Activated CD4-positive, alpha-beta T cell treated with anti-CD3 and anti-CD28 coated beads for 36 hours (primary cell): ENCODE measurements at regions of chr1 and their contacts with region 1.

Region 1: DNA sequence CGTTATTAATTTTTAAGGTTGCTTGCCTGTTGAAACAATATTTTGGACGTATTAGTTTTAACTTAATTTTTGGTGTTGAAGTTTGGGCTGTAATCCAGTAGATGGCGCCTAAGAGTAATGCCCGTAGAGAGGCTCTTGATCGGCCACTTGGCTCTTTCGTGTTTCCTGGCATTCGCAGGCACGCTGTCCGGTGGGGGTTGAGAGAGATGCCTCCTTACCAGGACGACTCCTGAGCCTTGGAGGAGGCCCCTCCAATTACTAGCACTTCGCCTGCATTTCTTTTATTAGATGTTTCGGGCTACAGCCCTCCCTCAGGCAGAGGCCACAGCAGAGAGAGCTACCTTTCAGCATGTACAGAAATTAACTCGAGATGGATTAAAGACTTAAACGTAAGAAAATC is 12.0 kb downstream of the OR2M4 start:
- DNase-seq: peak; percentile 42
- ATAC-seq: peak; percentile 55
- H3K4me3 Mint-ChIP-seq: no peak overlapping the region
- H3K27ac Mint-ChIP-seq: no peak overlapping the region
- H3K4me1 Mint-ChIP-seq: peaks cover 2% of the 10 kb centered on the region
- H3K27me3 Mint-ChIP-seq: peaks cover 8% of the 10 kb centered on the region

Region 2: GRCh38 chr1:248306103-248306502 is 62.9 kb after region 1 on chr1:
- CTCF ChIA-PET with region 1: no interaction called
- POLR2A ChIA-PET with region 1: no interaction called
- intact Hi-C with region 1: no loop called
- DNase-seq: no peak
- ATAC-seq: no peak
- H3K4me3 Mint-ChIP-seq: no peak overlapping the region
- H3K27ac Mint-ChIP-seq: no peak overlapping the region
- H3K4me1 Mint-ChIP-seq: no peaks in the 10 kb centered on the region
- H3K27me3 Mint-ChIP-seq: peaks cover 2% of the 10 kb centered on the region

Region 3: DNA sequence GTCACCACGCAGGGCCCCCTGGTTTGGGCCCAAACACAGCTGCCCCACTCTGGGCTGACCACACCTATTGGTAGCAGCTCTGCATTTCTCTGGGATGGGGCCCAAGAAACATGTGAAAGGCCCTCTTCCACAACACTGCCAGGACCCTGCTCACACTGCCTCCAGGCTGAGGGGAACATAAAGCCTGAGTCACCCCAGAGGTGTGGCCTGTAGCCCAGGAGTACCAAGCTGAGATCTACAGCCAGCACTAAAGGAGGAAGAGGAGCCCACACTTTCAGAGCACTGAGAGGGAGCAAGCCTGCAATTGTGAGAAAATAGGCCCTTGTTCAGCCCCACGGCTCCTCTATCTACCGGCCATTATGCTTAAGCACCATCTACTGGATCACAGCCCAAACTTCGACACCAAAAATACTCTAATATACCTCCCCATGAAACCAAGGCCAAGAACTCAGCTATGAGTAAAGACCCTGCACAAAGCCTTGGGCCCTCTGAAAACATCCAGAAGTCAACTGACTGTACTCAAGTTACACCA is 368.7 kb after region 1 on chr1:
- CTCF ChIA-PET with region 1: no interaction called
- POLR2A ChIA-PET with region 1: no interaction called
- intact Hi-C with region 1: loop called in 1 of 2 experiments (anchors 5 kb)
- DNase-seq: peak; percentile 37
- ATAC-seq: peak; percentile 86
- H3K4me3 Mint-ChIP-seq: no peak overlapping the region
- H3K27ac Mint-ChIP-seq: no peak overlapping the region
- H3K4me1 Mint-ChIP-seq: peaks cover 20% of the 10 kb centered on the region
- H3K27me3 Mint-ChIP-seq: no peaks in the 10 kb centered on the region

Region 4: DNA sequence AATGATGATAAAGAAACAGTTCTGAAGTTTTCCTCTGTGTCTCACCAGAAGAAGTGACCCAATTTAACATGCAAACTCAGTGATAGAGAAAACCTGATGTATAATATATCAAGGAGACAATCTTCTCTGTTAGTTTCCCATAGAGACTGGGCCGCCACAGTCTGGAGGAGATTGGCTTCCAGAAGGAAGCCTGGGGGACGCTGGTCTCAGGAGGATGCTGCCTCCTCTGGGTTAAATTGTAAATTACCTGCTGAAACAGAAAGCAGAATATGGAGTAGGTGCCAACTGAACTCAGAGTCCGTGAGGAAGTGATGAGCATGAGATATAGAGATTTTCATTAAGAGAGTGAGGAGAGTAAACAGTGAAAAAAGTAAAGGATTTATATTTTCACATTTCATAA is 443.6 kb after region 1 on chr1:
- CTCF ChIA-PET with region 1: interaction called, 4 read pairs
- POLR2A ChIA-PET with region 1: no interaction called
- intact Hi-C with region 1: loop called in 1 of 2 experiments (anchors 2 kb)
- DNase-seq: peak; percentile 34
- ATAC-seq: peak; percentile 53
- H3K4me3 Mint-ChIP-seq: no peak overlapping the region
- H3K27ac Mint-ChIP-seq: no peak overlapping the region
- H3K4me1 Mint-ChIP-seq: peaks cover 7% of the 10 kb centered on the region
- H3K27me3 Mint-ChIP-seq: peaks cover 3% of the 10 kb centered on the region

Region 5: DNA sequence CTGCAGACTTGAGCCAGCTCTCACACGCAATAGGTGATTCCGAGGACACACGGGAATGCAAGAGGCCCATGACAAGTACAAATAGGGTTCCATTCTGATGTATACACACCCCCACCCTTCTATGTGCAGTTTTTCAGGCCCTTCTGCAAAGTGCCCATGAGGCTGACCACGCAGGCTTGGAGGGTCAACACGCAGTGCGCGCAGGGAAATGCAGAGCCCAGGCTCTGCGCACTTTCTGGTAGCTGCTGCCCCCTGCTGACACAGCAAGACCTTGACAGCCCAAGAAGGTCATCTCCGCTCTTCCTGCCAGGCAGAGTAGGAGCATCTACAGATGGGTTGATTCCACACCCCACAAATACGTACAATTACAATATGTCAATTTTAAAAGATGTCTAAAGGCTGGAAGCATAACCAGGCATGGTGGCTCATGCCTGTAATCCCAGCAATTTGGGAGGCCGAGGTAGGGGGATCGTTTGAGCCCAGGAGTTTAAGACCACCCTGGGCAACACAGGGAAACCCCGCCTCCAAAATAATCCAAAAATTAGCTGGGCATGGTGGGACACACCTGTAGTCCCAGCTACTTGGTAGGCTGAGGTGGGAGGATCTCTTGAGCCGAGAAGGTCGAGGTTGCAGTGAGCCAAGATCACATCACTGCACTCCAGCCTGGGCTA is 564.0 kb after region 1 on chr1:
- CTCF ChIA-PET with region 1: interaction called, 11 read pairs
- POLR2A ChIA-PET with region 1: no interaction called
- intact Hi-C with region 1: loop called (anchors 1 to 2 kb)
- DNase-seq: peak; percentile 81
- ATAC-seq: peak; percentile 93
- H3K4me3 Mint-ChIP-seq: no peak overlapping the region
- H3K27ac Mint-ChIP-seq: no peak overlapping the region
- H3K4me1 Mint-ChIP-seq: no peaks in the 10 kb centered on the region
- H3K27me3 Mint-ChIP-seq: peaks cover 4% of the 10 kb centered on the region